RWPE1 (cell line): ENCODE measurements at regions of chr1 and their contacts with region 1.

Region 1: GRCh38 chr1:226424228-226425003 is 16.5 kb upstream of the PARP1 start:
- DNase-seq: peak; percentile 65
- H3K27ac ChIP-seq: no peak overlapping the region
- CTCF ChIP-seq: peak; percentile 62

Region 2: DNA sequence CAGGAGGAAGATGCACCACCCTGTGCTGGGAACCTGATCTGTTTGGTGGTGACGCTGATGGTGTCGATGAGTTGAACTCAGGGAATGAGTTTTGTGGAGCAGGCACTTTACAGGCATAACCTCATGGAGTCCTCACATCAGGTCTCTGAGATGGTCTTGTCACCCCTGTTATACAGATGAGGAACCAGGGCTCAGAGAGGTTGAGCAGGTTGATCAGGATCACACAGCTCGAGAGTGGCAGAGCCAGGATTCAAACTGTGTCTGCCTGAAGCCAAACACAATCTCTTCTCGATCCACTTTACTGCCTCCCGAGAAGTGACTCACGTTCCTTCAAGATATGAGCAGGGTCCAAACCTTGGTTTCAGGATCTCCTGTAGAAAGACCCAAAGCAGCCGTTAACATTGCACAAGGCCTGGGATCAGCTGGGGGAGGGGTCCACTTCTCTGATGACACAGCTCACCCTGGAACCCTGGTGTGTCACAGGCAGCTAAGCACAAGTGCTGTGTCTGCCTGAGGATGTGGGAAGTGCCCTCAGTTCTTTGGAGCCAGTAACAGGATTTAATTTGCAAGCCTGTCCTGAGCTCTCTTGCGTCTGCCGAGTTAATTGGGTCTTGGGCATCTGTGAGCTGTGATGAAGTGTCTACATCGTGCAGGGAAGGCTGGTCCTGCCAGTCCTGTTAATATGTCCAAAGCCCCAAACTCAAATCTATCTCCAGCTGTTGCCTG is 58.7 kb after region 1 on chr1:
- CTCF ChIA-PET with region 1: no interaction called
- POLR2A ChIA-PET with region 1: no interaction called
- DNase-seq: no peak
- H3K27ac ChIP-seq: no peak overlapping the region
- CTCF ChIP-seq: no peak

Region 3: DNA sequence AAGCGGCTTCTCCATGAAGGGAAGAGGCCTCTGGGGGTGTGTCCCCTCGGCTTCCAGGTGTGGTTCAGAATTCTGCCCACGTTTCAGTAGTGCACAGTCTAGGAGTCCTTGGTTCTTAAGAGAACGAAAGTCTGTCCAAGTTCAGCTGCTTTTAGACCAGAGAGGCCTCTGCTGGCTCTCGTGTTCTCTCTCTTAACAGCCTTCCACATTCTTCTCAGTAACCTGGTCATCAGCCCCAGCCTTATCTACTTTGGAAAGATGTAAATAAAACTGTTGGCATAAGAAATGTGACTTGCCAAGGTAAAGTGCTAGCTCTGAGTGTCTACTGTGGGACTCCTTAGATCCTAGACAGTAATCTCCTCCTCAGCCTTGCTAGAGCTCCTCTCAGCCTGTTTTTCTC is 108.8 kb after region 1 on chr1:
- CTCF ChIA-PET with region 1: no interaction called
- POLR2A ChIA-PET with region 1: no interaction called
- DNase-seq: no peak
- H3K27ac ChIP-seq: no peak overlapping the region
- CTCF ChIP-seq: no peak

Region 4: GRCh38 chr1:226547754-226548191 is 123.4 kb after region 1 on chr1:
- CTCF ChIA-PET with region 1: interaction called, 34 read pairs
- POLR2A ChIA-PET with region 1: no interaction called
- DNase-seq: peak; percentile 95
- H3K27ac ChIP-seq: no peak overlapping the region
- CTCF ChIP-seq: peak; percentile 98